ENCODE measurements at regions of chr19 and their contacts with region 1.

Region 1: GRCh38 chr19:18521885-18522624 is at the start of gene ELL:
- DNase-seq: peak; percentile 99 to 100 (median 100)
- ATAC-seq: peak; percentile 92
- H3K4me3 ChIP-seq: peak within 1 kb of the TSS; percentile 89
- H3K4me3 Mint-ChIP-seq: peak within 1 kb of the TSS; percentile 87 to 99 (median 94)
- H3K27ac ChIP-seq: peak within 1 kb of the TSS; percentile 94
- H3K27ac Mint-ChIP-seq: peak within 1 kb of the TSS; percentile 89 to 98 (median 95)
- H3K4me1 ChIP-seq: peaks cover 5 to 10% of the 10 kb centered on the region in 2 donors
- H3K4me1 Mint-ChIP-seq: peaks cover 0 to 24% (median 17%) of the 10 kb centered on the region in 7 donors
- H3K27me3 ChIP-seq: no peaks in the 10 kb centered on the region
- H3K27me3 Mint-ChIP-seq: no peaks in the 10 kb centered on the region
- total RNA-seq, gene ELL: 18.9 to 70.4 (median 25.0) TPM

Region 2: GRCh38 chr19:17932485-17933338 is 589.3 kb before region 1 on chr19 and contains the start of gene CCDC124:
- CTCF ChIA-PET with region 1: no interaction called
- POLR2A ChIA-PET with region 1: no interaction called
- intact Hi-C with region 1: loop called in 1 of 2 experiments (anchors 2 kb)
- DNase-seq: peak; percentile 89 to 96 (median 94)
- ATAC-seq: peak; percentile 99
- H3K4me3 ChIP-seq: peak within 1 kb of the TSS; percentile 69
- H3K4me3 Mint-ChIP-seq: peak within 1 kb of the TSS; percentile 85 to 97 (median 93)
- H3K27ac ChIP-seq: peak within 1 kb of the TSS; percentile 86
- H3K27ac Mint-ChIP-seq: peak within 1 kb of the TSS; percentile 90 to 97 (median 95)
- H3K4me1 ChIP-seq: peaks cover 10 to 11% of the 10 kb centered on the region in 2 donors
- H3K4me1 Mint-ChIP-seq: peaks cover 6 to 24% (median 15%) of the 10 kb centered on the region in 7 donors
- H3K27me3 ChIP-seq: no peaks in the 10 kb centered on the region
- H3K27me3 Mint-ChIP-seq: peaks cover 0 to 2% (median 0%) of the 10 kb centered on the region in 5 donors
- total RNA-seq, gene CCDC124: 28.7 to 60.5 (median 32.6) TPM

Region 3: DNA sequence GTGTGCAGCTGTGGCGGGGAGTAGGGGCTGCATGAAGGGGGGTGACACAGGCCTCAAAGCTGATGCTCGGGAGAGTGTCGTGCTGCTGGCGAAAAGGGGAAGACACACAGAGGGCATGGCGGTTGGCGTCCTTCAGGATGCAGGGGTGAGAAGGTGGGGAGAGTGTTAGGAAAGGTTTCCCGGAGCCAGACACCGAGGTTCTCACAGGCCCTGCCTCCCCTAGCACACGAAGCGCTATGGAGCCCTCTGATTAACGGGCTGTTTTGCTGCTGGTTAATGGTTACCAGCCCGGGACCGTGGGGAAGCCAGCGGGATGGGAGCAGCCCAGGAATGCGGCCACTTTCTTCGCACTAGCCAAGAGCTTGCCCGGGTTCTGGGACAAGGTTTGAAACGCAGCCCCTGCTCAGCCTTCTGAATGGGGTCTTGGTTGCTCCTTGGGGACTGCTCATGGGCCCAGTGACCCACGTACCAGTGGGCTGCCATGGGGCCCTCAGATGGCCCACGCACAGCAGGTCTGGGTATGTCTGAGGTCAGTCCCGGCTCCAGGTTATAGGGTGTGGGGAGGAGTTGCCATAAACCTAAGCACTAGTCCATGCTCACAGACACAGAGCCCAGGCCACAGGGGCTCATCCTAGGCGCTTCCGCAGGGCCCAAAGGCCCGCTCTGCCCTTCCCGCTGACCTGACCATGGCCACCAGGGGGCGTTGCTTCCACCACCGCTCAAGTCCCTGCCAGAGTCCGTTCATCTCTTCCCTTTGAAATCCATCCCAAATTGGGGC is 52.8 kb before region 1 on chr19:
- CTCF ChIA-PET with region 1: interaction called, 5 read pairs
- POLR2A ChIA-PET with region 1: no interaction called
- intact Hi-C with region 1: loop called (anchors 5 to 10 kb)
- DNase-seq: peak in 8 of 9 donors; percentile 31 to 70 (median 51)
- ATAC-seq: peak; percentile 63
- H3K4me3 ChIP-seq: no peak overlapping the region
- H3K4me3 Mint-ChIP-seq: no peak overlapping the region
- H3K27ac ChIP-seq: no peak overlapping the region
- H3K27ac Mint-ChIP-seq: peak overlapping the region in 1 of 9 donors; percentile 42
- H3K4me1 ChIP-seq: peaks cover 0 to 19% of the 10 kb centered on the region in 2 donors
- H3K4me1 Mint-ChIP-seq: peaks cover 4 to 20% (median 12%) of the 10 kb centered on the region in 7 donors
- H3K27me3 ChIP-seq: no peaks in the 10 kb centered on the region
- H3K27me3 Mint-ChIP-seq: no peaks in the 10 kb centered on the region

Region 4: DNA sequence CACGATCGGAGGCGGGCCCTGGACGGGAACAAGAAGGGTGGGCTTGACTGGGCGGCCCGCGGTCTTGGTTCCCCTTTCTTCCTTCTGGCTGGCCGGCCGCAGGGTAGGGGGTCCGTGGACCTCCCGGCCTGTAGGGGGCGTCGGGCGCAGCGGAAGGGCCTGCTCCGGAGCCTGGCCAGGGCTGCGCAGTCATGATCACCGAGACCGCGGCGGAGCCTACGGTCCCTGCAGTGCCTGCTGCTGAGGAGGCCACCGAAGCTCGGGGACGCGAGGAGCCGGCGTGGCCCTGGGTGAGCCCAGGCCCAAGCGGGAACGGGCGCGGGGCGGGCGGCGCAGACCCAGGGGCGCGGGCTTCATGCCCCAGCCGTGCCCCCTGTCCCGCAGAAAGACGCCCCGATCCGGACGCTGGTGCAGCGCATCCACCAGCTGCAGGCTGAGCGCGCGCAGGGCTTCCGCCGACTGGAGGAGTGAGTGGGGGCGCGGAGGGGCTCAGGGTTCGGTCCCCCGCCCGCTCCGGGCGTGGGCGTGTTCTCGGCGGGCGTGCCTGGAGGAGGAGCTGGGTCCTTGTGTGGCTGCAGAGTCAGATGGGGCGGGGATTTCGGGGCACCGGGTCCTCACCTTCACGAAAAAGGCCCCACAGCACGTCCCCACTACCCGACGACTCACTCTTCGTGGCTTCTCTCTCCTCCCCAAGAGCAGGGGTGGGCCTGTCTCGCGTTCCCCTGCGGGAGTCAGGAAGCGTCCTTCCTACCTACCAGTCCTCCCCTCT is 66.7 kb after region 1 on chr19 and contains the start of gene REX1BD:
- CTCF ChIA-PET with region 1: interaction called, 10 read pairs
- POLR2A ChIA-PET with region 1: interaction called, 29 read pairs
- intact Hi-C with region 1: loop called (anchors 1 kb)
- DNase-seq: peak; percentile 77 to 92 (median 89)
- ATAC-seq: peak; percentile 89
- H3K4me3 ChIP-seq: peak within 1 kb of the TSS; percentile 72
- H3K4me3 Mint-ChIP-seq: peak within 1 kb of the TSS; percentile 80 to 95 (median 92)
- H3K27ac ChIP-seq: peak within 1 kb of the TSS; percentile 88
- H3K27ac Mint-ChIP-seq: peak within 1 kb of the TSS; percentile 89 to 96 (median 93)
- H3K4me1 ChIP-seq: peaks cover 18 to 33% of the 10 kb centered on the region in 2 donors
- H3K4me1 Mint-ChIP-seq: peaks cover 20 to 56% (median 42%) of the 10 kb centered on the region in 7 donors
- H3K27me3 ChIP-seq: no peaks in the 10 kb centered on the region
- H3K27me3 Mint-ChIP-seq: peaks cover 0 to 3% (median 0%) of the 10 kb centered on the region in 5 donors
- total RNA-seq, gene REX1BD: 83.9 to 152 (median 116) TPM

Region 5: GRCh38 chr19:18785179-18786128 is 263.4 kb after region 1 on chr19:
- CTCF ChIA-PET with region 1: no interaction called
- POLR2A ChIA-PET with region 1: no interaction called
- intact Hi-C with region 1: loop called in 1 of 2 experiments (anchors 1 kb)
- DNase-seq: peak; percentile 19 to 71 (median 45)
- ATAC-seq: peak; percentile 85
- H3K4me3 ChIP-seq: no peak overlapping the region
- H3K4me3 Mint-ChIP-seq: peak overlapping the region; percentile 12 to 69 (median 51)
- H3K27ac ChIP-seq: no peak overlapping the region
- H3K27ac Mint-ChIP-seq: peak overlapping the region in 1 of 9 donors; percentile 48
- H3K4me1 ChIP-seq: peaks cover 11 to 13% of the 10 kb centered on the region in 2 donors
- H3K4me1 Mint-ChIP-seq: peaks cover 21 to 49% (median 37%) of the 10 kb centered on the region in 7 donors
- H3K27me3 ChIP-seq: peaks cover 4 to 16% of the 10 kb centered on the region in 2 donors
- H3K27me3 Mint-ChIP-seq: peaks cover 37 to 54% (median 44%) of the 10 kb centered on the region in 5 donors

Region 6: DNA sequence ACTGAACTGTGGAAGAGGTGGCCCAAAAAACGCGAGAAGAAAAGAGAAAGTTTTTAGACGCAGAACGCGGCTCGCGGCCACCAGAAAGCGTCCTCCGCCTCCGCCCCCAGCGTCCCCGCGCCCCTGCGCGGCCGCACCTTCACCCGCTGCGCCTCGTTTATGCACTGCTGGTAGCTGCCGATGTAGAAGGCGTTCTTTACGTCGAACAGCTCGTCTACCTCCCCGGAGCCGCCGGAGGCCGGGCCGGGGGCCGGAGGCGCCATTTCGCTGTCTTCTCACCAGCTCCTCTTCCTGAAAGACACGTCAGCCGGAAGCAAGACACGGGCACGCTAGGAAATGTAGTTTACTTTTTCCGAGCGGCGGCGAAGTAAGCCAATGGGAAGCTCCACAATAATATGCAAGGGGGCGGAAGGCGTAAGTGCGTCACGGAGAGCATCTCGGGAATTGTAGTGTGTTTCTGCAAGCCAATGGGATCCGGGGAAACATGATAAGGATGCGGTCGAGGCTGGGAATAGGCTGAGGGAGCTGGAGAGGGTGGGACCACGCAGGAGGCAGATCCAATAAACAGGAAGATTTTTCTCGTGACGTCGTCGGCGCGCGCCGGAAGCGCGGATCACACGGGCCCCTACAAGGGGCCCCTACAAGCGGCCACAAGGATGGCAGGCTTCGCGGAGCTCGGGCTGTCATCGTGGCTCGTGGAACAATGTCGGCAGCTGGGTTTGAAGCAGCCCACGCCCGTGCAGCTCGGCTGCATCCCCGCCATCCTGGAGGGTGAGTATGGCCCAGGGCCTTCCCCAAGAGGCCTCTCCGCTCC is 397.2 kb after region 1 on chr19 and contains the starts of genes COPE and DDX49:
- CTCF ChIA-PET with region 1: interaction called, 3 read pairs
- POLR2A ChIA-PET with region 1: interaction called, 12 read pairs
- intact Hi-C with region 1: loop called (anchors 1 kb)
- DNase-seq: peak; percentile 85 to 99 (median 99)
- ATAC-seq: peak; percentile 97
- H3K4me3 ChIP-seq: peak within 1 kb of the TSS; percentile 85
- H3K4me3 Mint-ChIP-seq: peak within 1 kb of the TSS; percentile 71 to 100 (median 92)
- H3K27ac ChIP-seq: peak within 1 kb of the TSS; percentile 93
- H3K27ac Mint-ChIP-seq: peak within 1 kb of the TSS; percentile 76 to 98 (median 96)
- H3K4me1 ChIP-seq: peaks cover 18 to 21% of the 10 kb centered on the region in 2 donors
- H3K4me1 Mint-ChIP-seq: peaks cover 25 to 63% (median 36%) of the 10 kb centered on the region in 7 donors
- H3K27me3 ChIP-seq: no peaks in the 10 kb centered on the region
- H3K27me3 Mint-ChIP-seq: peaks cover 0 to 2% (median 0%) of the 10 kb centered on the region in 5 donors
- total RNA-seq, gene COPE: 124 to 283 (median 163) TPM
- total RNA-seq, gene DDX49: 36.4 to 63.2 (median 50.2) TPM

Region 7: GRCh38 chr19:19192078-19192882 is 670.2 kb after region 1 on chr19 and contains the starts of genes BORCS8 and RFXANK:
- CTCF ChIA-PET with region 1: no interaction called
- POLR2A ChIA-PET with region 1: no interaction called
- intact Hi-C with region 1: loop called (anchors 1 kb)
- DNase-seq: peak; percentile 89 to 99 (median 99)
- ATAC-seq: peak; percentile 95
- H3K4me3 ChIP-seq: peak within 1 kb of the TSS; percentile 100
- H3K4me3 Mint-ChIP-seq: peak within 1 kb of the TSS; percentile 94 to 100 (median 98)
- H3K27ac ChIP-seq: peak within 1 kb of the TSS; percentile 100
- H3K27ac Mint-ChIP-seq: peak within 1 kb of the TSS; percentile 99 to 100 (median 99)
- H3K4me1 ChIP-seq: peaks cover 13 to 22% of the 10 kb centered on the region in 2 donors
- H3K4me1 Mint-ChIP-seq: peaks cover 23 to 68% (median 45%) of the 10 kb centered on the region in 7 donors
- H3K27me3 ChIP-seq: no peaks in the 10 kb centered on the region
- H3K27me3 Mint-ChIP-seq: no peaks in the 10 kb centered on the region
- total RNA-seq, gene BORCS8: 22.6 to 48.2 (median 42.7) TPM
- total RNA-seq, gene RFXANK: 60.8 to 114 (median 74.9) TPM

Measured in naive thymus-derived CD4-positive, alpha-beta T cell (primary cell).